ENCODE measurements at regions of chr1 and their contacts with region 1.

Region 1: DNA sequence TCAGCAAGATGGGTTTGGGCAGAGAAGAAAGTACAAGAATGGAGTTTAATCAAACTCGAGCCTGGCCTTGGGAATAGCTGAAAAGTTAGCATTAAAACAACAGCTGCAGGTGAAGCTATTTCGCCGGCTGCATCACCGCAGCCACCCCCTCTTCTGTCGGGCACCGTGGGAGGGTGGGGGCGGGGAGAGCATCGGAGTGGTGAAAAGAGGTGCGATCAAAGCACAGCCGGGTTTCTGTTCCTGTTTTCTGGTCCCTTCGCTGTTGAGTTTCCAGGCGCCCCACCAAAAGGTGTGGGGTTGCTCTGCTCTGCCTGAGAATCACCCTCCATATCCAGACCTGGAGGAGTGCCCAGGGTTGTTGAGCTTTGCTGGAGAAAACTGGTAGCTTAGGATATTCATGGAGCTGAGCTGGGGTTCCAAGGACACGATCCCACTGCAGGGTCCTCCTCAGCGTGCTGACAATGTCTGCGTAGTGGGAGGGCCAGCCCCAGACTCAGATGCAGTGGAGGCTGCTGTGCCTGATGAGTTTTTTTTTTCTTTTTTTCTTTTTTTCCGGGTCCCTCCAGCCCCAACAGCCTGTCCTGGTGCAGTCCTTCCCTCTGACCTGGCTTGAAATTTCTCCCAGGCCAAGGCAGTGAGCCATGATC is 127.5 kb upstream of the C1orf174 start:
- DNase-seq: peak; percentile 65
- ATAC-seq: peak; percentile 94
- H3K4me3 Mint-ChIP-seq: peak overlapping the region; percentile 69
- H3K27ac Mint-ChIP-seq: peak overlapping the region; percentile 75
- H3K4me1 Mint-ChIP-seq: peaks cover 63% of the 10 kb centered on the region
- H3K27me3 Mint-ChIP-seq: no peaks in the 10 kb centered on the region
- CTCF ChIP-seq: no peak

Region 2: DNA sequence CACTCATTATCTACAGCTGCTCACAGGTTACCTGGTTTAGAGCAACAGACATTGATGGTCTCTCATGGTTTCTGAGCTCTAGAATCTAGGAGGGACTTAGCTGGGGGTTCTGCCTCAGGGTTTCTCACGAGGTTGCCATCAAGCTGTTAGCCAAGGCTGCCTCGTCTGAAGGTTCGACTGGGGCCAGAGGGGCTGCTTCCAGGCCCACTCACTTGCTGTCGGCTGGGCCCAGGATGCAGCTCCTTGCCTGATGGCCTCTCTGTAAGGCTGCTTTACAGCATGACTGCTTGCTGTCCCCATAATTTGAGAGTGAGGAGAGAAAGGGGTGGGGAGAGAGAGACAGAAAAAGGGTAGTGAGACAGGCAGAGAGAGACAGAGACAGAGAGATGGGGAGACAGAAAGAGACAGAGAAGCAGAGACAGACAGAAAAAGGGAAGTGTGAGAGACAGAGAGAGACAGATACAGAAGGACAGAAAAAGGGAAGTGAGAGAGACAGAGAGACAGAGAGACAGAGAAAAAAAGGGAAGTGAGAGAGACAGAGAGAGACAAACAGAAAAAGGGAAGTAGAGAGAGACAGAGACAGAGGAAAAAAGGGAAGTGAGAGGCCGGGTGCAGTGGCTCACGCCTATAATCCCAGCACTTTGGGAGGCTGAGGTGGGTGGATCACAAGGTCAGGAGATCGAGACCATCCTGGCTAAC is 20.8 kb before region 1 on chr1:
- CTCF ChIA-PET with region 1: no interaction called
- POLR2A ChIA-PET with region 1: interaction called, 4 read pairs
- intact Hi-C with region 1: loop called (anchors 1 kb)
- DNase-seq: no peak
- ATAC-seq: peak; percentile 62
- H3K4me3 Mint-ChIP-seq: peak overlapping the region; percentile 50
- H3K27ac Mint-ChIP-seq: peak overlapping the region; percentile 93
- H3K4me1 Mint-ChIP-seq: peaks cover 28% of the 10 kb centered on the region
- H3K27me3 Mint-ChIP-seq: no peaks in the 10 kb centered on the region
- CTCF ChIP-seq: no peak

Measured in activated B cell treated with CpG ODN at 0.5 μM for 24 hours (primary cell).